ENCODE measurements at regions of chr13 and their contacts with region 1.

Region 1: GRCh38 chr13:52617070-52618060 is 24.9 kb upstream of the HNRNPA1L2 start:
- DNase-seq: peak; percentile 90
- H3K4me3 Mint-ChIP-seq: peak overlapping the region; percentile 100
- H3K27ac Mint-ChIP-seq: peak overlapping the region; percentile 93
- H3K4me1 Mint-ChIP-seq: peaks cover 27% of the 10 kb centered on the region
- H3K27me3 Mint-ChIP-seq: no peaks in the 10 kb centered on the region

Region 2: GRCh38 chr13:52011632-52012511 is 605.5 kb before region 1 on chr13 and contains the start of gene ALG11:
- CTCF ChIA-PET with region 1: no interaction called
- intact Hi-C with region 1: loop called (anchors 1 kb)
- DNase-seq: peak; percentile 100
- H3K4me3 Mint-ChIP-seq: peak within 1 kb of the TSS; percentile 98
- H3K27ac Mint-ChIP-seq: peak within 1 kb of the TSS; percentile 85
- H3K4me1 Mint-ChIP-seq: peaks cover 14% of the 10 kb centered on the region
- H3K27me3 Mint-ChIP-seq: peaks cover 10% of the 10 kb centered on the region
- total RNA-seq, gene ALG11: 12.6 to 15.6 TPM

Region 3: GRCh38 chr13:52194184-52194868 is 423.0 kb before region 1 on chr13:
- CTCF ChIA-PET with region 1: no interaction called
- intact Hi-C with region 1: loop called (anchors 5 kb)
- DNase-seq: peak; percentile 90
- H3K4me3 Mint-ChIP-seq: peak overlapping the region; percentile 98
- H3K27ac Mint-ChIP-seq: peak overlapping the region; percentile 97
- H3K4me1 Mint-ChIP-seq: peaks cover 30% of the 10 kb centered on the region
- H3K27me3 Mint-ChIP-seq: no peaks in the 10 kb centered on the region

Region 4: DNA sequence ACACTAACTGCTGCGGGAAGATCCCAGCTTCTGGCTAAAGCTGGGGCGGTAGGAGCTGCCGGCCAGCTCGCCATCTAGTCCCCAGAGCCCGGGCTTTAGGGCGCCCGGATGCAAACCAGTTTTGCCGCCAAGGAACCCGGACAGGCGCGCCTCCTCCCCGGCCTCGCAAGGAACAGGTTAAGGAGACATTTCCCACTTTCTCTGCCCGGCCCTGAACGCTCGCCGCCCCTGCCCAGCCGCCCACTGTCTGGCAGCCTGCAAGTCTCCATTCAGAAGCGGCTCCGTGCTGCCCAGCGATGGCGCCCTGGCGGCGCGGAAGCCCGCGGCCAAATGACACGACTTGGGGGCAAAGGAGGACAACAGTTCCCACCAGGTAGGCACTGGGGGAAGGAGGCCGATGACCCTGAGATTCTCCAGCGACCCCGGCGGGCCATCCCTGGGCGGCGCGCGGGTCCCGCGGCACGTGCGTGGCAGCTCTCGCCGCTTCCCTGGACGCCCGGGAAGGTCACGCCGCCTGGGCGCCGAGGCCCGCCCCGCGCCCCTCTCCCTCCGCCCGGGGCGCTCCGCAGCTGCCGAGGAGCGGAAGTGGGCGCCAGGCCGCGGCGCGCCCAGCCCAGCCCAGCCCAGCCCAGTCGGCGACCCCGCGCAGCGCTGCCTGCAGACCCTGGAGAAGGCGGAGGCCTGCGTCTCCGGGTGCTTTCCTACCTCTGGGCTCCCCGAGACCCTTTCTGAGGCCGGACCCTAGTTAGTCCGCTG is 17.3 kb before region 1 on chr13:
- CTCF ChIA-PET with region 1: interaction called, 4 read pairs
- intact Hi-C with region 1: loop called (anchors 1 kb)
- DNase-seq: peak; percentile 14
- H3K4me3 Mint-ChIP-seq: peak overlapping the region; percentile 70
- H3K27ac Mint-ChIP-seq: no peak overlapping the region
- H3K4me1 Mint-ChIP-seq: peaks cover 7% of the 10 kb centered on the region
- H3K27me3 Mint-ChIP-seq: peaks cover 21% of the 10 kb centered on the region

Region 5: DNA sequence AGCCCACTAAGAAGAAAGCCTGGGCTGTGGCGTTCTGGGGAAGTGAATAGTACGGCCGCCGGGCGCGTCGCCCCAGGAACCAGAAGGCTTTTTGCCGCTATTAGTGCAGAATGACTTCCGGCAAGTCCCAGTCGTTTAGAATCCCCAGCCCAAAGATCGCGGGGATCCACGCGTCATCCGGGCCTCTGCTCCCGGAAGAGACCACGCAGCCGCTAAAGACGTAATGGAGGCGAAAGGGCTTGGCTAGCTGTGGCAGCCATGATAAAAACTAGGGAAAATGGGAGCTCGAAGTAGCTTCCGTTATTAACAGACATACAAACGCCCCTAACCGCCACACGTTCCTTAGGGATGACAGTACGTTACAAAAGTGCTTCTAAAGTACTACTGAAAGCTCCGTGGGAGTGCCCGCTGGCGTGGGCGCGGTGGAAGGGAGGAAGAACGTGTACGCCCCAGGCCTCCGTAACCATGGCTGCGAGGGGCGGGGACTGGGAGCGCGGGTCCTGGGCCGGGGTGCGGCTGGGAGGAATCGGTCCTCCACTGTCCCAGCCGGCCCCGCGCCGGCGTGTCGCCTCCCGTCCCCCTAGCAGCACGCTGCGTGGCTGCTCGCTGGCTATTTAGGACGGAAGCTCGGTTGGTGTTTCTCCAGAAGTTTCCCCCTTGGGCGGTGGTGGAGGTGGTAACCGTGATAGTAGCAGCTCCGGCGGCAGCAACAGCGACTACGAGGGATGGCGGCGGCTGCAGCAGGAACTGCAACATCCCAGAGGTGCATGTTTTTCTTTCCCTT is 35.0 kb after region 1 on chr13 and contains the start of gene SUGT1:
- CTCF ChIA-PET with region 1: interaction called, 15 read pairs
- intact Hi-C with region 1: loop called (anchors 1 kb)
- DNase-seq: peak; percentile 95
- H3K4me3 Mint-ChIP-seq: no peak within 1 kb of the TSS
- H3K27ac Mint-ChIP-seq: no peak within 1 kb of the TSS
- H3K4me1 Mint-ChIP-seq: peaks cover 14% of the 10 kb centered on the region
- H3K27me3 Mint-ChIP-seq: no peaks in the 10 kb centered on the region
- total RNA-seq, gene SUGT1: 42.7 to 44.1 TPM

Region 6: DNA sequence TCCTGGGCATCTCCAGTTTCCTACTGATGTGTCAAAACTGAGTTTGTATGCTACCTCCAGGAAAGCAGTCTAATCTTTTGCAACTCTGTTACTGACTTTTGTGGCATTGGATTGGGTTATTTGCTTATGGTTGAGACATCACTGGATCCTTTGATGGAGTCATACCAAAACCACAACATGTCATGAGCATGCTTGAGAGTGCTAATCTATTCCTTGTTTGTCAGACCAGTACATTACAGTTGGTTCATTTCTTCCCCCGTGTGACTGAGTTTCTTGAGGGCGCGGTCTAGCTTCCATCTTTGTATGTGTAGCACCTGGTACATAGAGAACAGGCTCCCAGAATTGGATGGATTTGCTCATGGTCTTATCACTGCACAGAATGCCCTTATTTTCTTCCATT is 78.5 kb after region 1 on chr13:
- CTCF ChIA-PET with region 1: interaction called, 3 read pairs
- intact Hi-C with region 1: loop called (anchors 2 kb)
- DNase-seq: peak; percentile 63
- H3K4me3 Mint-ChIP-seq: no peak overlapping the region
- H3K27ac Mint-ChIP-seq: no peak overlapping the region
- H3K4me1 Mint-ChIP-seq: peaks cover 14% of the 10 kb centered on the region
- H3K27me3 Mint-ChIP-seq: no peaks in the 10 kb centered on the region

Region 7: GRCh38 chr13:52832268-52832667 is 214.9 kb after region 1 on chr13:
- CTCF ChIA-PET with region 1: no interaction called
- intact Hi-C with region 1: no loop called
- DNase-seq: no peak
- H3K4me3 Mint-ChIP-seq: no peak overlapping the region
- H3K27ac Mint-ChIP-seq: no peak overlapping the region
- H3K4me1 Mint-ChIP-seq: no peaks in the 10 kb centered on the region
- H3K27me3 Mint-ChIP-seq: peaks cover 16% of the 10 kb centered on the region

Region 8: GRCh38 chr13:52850396-52851136 is 233.2 kb after region 1 on chr13:
- CTCF ChIA-PET with region 1: interaction called, 3 read pairs
- intact Hi-C with region 1: loop called (anchors 5 kb)
- DNase-seq: peak; percentile 69
- H3K4me3 Mint-ChIP-seq: peak overlapping the region; percentile 63
- H3K27ac Mint-ChIP-seq: no peak overlapping the region
- H3K4me1 Mint-ChIP-seq: peaks cover 28% of the 10 kb centered on the region
- H3K27me3 Mint-ChIP-seq: peaks cover 72% of the 10 kb centered on the region

Measured in activated naive CD4-positive, alpha-beta T cell treated with anti-CD3 and anti-CD28 coated beads for 36 hours (primary cell).